Calu3 (cell line): ENCODE measurements at regions of chr1 and their contacts with region 1.

Region 1: DNA sequence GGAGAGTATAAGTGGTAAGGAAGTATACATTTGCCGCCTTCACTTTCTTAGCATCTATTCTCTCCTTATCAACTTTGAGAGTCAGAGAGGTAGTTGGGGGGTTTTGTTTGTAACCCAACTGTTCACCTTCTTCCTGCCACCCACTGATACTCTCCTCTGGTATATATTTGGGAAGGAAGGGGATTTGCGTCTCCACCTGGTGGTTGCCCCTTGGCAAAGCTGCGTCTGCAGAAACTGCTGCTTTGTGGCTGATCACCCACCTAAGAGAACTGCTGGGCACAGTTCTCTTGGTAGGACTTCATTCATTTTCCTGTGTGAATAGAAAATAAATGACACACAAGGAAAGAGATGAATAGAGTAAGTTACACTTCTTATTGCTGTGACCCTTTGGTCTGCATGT is 87.0 kb downstream of the SYT14 start:
- DNase-seq: peak; percentile 4
- H3K4me3 Mint-ChIP-seq: no peak overlapping the region
- H3K27ac Mint-ChIP-seq: no peak overlapping the region
- H3K4me1 Mint-ChIP-seq: no peaks in the 10 kb centered on the region
- H3K27me3 Mint-ChIP-seq: peaks cover under 1% of the 10 kb centered on the region
- CTCF ChIP-seq: no peak

Region 2: GRCh38 chr1:208709981-208710380 is 1315.0 kb before region 1 on chr1:
- CTCF ChIA-PET with region 1: no interaction called
- intact Hi-C with region 1: no loop called
- DNase-seq: no peak
- H3K4me3 Mint-ChIP-seq: no peak overlapping the region
- H3K27ac Mint-ChIP-seq: no peak overlapping the region
- H3K4me1 Mint-ChIP-seq: no peaks in the 10 kb centered on the region
- H3K27me3 Mint-ChIP-seq: no peaks in the 10 kb centered on the region
- CTCF ChIP-seq: no peak

Region 3: DNA sequence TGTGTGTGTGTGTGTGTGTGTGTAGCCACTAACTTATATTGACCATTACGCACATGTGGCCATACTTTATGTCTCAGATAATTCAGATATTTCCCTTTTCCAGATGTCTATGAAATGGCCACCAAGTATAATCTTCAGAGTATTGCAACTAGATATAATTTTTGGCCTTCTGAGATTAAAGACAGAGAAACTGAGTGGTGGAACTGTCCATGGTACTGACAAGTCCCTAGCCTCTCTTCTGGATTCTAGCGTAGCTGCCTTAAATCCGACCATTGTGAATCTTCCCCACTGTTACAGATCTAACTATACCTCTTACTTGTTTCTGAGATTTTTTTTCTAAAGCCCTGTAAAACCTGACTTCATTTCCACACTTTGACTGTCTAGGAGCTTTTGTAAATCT is 107.6 kb after region 1 on chr1:
- CTCF ChIA-PET with region 1: no interaction called
- intact Hi-C with region 1: loop called (anchors 5 kb)
- DNase-seq: peak; percentile 31
- H3K4me3 Mint-ChIP-seq: no peak overlapping the region
- H3K27ac Mint-ChIP-seq: no peak overlapping the region
- H3K4me1 Mint-ChIP-seq: no peaks in the 10 kb centered on the region
- H3K27me3 Mint-ChIP-seq: no peaks in the 10 kb centered on the region
- CTCF ChIP-seq: no peak